Activated CD4-positive, alpha-beta memory T cell treated with anti-CD3 and anti-CD28 coated beads, Interleukin-2, amount 10 ng/mL, durations not matched to agents 7 days and 5 days (primary cell): ENCODE measurements at regions of chr2 and their contacts with region 1.

Region 1: GRCh38 chr2:29115797-29116781 is 874 bp downstream of the CLIP4 start:
- DNase-seq: peak; percentile 88
- H3K4me3 Mint-ChIP-seq: peak overlapping the region; percentile 84
- H3K27ac Mint-ChIP-seq: peak overlapping the region; percentile 97
- H3K4me1 Mint-ChIP-seq: peaks cover 58% of the 10 kb centered on the region
- H3K27me3 Mint-ChIP-seq: peaks cover 6% of the 10 kb centered on the region

Region 2: GRCh38 chr2:29146197-29146596 is 30.1 kb after region 1 on chr2:
- CTCF ChIA-PET with region 1: no interaction called
- POLR2A ChIA-PET with region 1: interaction called, 12 read pairs
- DNase-seq: no peak
- H3K4me3 Mint-ChIP-seq: no peak overlapping the region
- H3K27ac Mint-ChIP-seq: no peak overlapping the region
- H3K4me1 Mint-ChIP-seq: peaks cover 5% of the 10 kb centered on the region
- H3K27me3 Mint-ChIP-seq: no peaks in the 10 kb centered on the region

Region 3: GRCh38 chr2:29187926-29188325 is 71.8 kb after region 1 on chr2:
- CTCF ChIA-PET with region 1: no interaction called
- POLR2A ChIA-PET with region 1: no interaction called
- DNase-seq: no peak
- H3K4me3 Mint-ChIP-seq: no peak overlapping the region
- H3K27ac Mint-ChIP-seq: no peak overlapping the region
- H3K4me1 Mint-ChIP-seq: no peaks in the 10 kb centered on the region
- H3K27me3 Mint-ChIP-seq: no peaks in the 10 kb centered on the region